GM23248 (cell line): ENCODE measurements at regions of chr1 and their contacts with region 1.

Region 1: GRCh38 chr1:89483010-89483756 is 41.4 kb upstream of the LRRC8B start:
- DNase-seq: peak; percentile 88
- H3K4me3 ChIP-seq: no peak overlapping the region
- H3K27ac ChIP-seq: no peak overlapping the region
- H3K4me1 ChIP-seq: no peaks in the 10 kb centered on the region
- H3K27me3 ChIP-seq: no peaks in the 10 kb centered on the region

Region 2: GRCh38 chr1:89598450-89599331 is 115.5 kb after region 1 on chr1:
- in situ Hi-C with region 1: loop called (anchors 25 kb)
- DNase-seq: peak; percentile 59
- H3K4me3 ChIP-seq: no peak overlapping the region
- H3K27ac ChIP-seq: no peak overlapping the region
- H3K4me1 ChIP-seq: peaks cover 16% of the 10 kb centered on the region
- H3K27me3 ChIP-seq: no peaks in the 10 kb centered on the region